Posterior vena cava (tissue), 2 donors: ENCODE measurements at regions of chr6 and their contacts with region 1.

Region 1: GRCh38 chr6:46453221-46453620 is 38.0 kb downstream of the RCAN2 start:
- DNase-seq: no peak

Region 2: DNA sequence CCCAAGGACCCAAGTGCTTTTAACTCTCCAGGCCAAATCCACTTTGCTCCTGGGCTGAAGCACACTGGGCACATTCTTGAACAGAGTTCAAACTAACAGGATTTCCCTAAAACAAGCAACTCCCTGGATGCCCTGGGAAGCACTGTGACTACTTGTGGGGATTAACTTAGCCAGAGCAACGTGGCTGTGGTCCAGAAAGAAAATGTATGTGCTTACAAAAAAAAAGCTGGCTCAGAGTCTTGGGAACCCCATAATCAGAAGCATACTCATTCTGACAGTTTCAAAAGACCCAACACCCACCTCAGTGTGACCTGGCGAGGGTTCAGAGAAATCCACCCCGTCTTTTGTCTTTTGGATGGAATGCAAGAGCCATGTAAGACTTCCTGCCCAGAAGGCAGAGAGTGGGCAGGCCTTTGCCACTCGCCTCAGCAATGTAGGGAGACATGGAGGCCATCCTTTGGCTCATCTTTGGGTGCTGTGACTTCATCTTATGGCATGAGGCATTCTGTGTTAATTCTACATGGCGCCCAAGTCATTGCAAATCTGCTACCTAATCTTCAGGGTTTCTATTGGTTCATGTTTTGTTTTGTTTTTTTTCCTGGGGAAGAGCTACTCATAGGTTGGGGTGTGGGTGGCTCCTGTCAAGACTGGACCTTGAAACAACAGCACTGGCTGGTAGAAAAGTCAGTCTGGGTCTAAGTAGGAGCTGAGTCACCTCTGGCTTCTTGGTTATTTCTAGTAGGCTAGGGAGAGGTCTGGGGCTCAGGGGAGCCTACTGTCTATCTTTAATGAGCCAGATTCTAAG is 826.9 kb before region 1 on chr6:
- intact Hi-C with region 1: no loop called
- DNase-seq: no peak

Region 3: DNA sequence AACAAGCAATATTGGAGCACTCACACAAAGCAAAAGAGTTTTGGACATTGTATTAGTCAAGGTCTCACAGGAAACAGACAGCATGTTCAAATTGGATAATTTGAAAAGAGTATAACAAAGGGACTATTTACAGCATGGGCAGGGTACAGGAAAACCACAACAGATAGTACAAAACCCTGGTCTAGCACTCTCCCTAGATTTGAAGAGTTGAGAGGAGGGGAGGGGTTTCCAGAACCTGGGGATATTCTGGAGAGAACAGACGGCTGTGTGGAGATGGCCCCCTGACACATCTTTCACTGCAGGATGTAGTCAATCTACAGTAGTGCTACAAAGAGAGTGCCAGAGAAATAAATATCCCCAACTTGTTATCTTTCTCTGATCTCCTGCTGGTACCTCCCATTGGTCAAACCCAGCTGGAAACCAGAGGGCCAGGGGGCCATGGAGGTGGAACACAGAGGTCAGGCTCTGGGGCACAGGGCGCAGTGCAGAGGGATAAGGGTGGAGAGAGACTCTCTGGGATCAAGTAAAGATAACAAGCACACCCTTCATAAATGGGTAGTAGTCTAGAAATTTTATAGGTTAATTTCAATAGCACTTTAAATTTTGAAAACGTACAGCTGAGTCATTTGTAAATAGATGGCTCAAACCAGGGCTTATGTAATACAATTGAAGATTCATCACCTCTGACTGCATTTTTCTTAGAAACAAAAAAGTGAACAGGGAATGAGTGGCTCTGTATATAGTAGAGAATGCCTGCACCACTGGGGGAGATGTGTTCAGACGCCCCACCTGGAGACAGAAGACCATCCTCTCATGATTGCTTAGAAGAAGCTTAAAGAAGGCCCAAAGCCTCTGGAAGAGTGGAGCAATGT is 12.3 kb after region 1 on chr6:
- intact Hi-C with region 1: loop called in 1 of 2 experiments (anchors 2 kb)
- DNase-seq: no peak